ENCODE measurements at regions of chr17 and their contacts with region 1.

Region 1: DNA sequence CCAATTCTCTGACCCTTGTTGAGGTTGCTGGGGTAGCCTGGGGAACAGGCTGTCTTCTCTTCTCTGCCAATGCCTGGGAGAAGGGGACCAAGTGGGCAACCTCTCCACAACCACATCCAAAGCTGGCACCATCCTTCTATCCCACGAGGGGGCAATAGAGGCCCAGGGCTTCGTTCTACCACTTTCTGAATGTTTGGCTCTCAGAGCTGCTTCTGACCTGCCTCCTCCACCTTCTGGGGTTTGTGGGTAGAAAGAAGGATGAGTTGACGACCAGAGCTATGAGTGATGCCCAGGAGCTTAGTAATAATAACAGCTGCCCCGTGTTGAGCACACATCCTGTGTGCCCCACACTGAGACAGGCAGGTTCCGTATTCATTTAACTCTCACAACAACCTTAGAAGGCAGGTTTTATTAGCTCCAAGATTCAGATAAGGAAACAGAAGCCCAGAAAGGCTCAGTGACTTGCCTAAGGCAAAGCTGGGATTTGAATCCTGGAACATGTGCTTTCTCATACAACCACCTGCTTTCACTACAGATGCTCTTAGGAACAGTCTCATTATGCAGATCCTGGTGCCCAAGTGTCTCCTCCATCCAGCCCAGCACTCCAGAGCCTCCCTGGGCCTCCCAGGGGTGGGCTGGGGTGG is 11.1 kb downstream of the TSPOAP1 start:
- DNase-seq: peak; percentile 14
- H3K4me3 ChIP-seq: no peak overlapping the region
- H3K27me3 ChIP-seq: no peaks in the 10 kb centered on the region
- CTCF ChIP-seq: peak; percentile 84

Region 2: GRCh38 chr17:58265902-58266875 is 51.4 kb before region 1 on chr17:
- CTCF ChIA-PET with region 1: no interaction called
- POLR2A ChIA-PET with region 1: no interaction called
- DNase-seq: no peak
- H3K4me3 ChIP-seq: no peak overlapping the region
- H3K27me3 ChIP-seq: peaks cover 1% of the 10 kb centered on the region; the same call in 1 of the 2 replicates
- CTCF ChIP-seq: no peak

Region 3: GRCh38 chr17:58294034-58294433 is 23.5 kb before region 1 on chr17:
- CTCF ChIA-PET with region 1: no interaction called
- POLR2A ChIA-PET with region 1: no interaction called
- DNase-seq: no peak
- H3K4me3 ChIP-seq: no peak overlapping the region
- H3K27me3 ChIP-seq: no peaks in the 10 kb centered on the region; the same call in 1 of the 2 replicates
- CTCF ChIP-seq: no peak

Region 4: DNA sequence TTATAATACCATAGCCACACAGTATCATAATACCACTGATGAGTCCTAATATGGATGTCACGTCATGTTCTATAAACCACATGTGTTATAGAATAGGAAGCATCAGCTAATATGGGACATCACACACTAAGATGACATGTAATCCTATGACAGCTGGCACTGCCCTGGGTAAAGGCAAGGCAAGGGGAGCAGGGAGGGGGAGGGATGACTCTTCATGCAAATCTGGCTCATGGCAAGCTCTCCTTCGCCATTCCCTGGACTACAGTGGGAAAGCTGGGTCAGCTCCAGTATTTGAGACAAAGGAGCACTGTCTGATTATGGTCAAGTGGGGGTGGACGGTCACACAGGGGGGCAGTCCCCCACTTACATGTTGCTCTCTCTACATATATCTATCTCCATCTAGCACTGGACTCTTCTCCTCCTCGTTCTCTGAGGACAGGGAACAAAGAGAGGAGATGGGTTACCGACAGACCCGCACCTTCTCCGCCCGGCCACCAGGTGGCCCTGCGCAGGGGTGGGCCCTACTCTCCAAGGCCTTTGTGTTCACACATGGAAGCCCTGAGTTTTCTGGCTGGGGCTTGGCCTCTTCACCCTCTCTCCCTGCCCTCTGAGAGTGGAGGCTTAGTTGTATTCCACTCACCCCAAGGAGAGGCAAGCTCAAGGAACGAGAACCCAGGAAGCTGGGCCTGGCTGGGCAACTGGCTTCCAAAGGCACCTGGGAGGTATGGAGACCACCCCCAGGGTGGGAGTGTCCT is 13.4 kb before region 1 on chr17:
- CTCF ChIA-PET with region 1: interaction called, 25 read pairs
- POLR2A ChIA-PET with region 1: no interaction called
- DNase-seq: no peak
- H3K4me3 ChIP-seq: no peak overlapping the region
- H3K27me3 ChIP-seq: no peaks in the 10 kb centered on the region
- CTCF ChIP-seq: peak; percentile 85

Region 5: GRCh38 chr17:58337600-58338453 is 20.3 kb after region 1 on chr17:
- CTCF ChIA-PET with region 1: interaction called, 19 read pairs
- POLR2A ChIA-PET with region 1: interaction called, 3 read pairs
- DNase-seq: peak; percentile 70
- H3K4me3 ChIP-seq: no peak overlapping the region
- H3K27me3 ChIP-seq: no peaks in the 10 kb centered on the region
- CTCF ChIP-seq: no peak; the same call in 1 of the 2 replicates

Region 6: GRCh38 chr17:58409432-58409831 is 91.9 kb after region 1 on chr17:
- CTCF ChIA-PET with region 1: interaction called, 95 read pairs
- POLR2A ChIA-PET with region 1: no interaction called
- DNase-seq: no peak
- H3K4me3 ChIP-seq: no peak overlapping the region
- H3K27me3 ChIP-seq: no peaks in the 10 kb centered on the region; the same call in 1 of the 2 replicates
- CTCF ChIP-seq: no peak

Region 7: DNA sequence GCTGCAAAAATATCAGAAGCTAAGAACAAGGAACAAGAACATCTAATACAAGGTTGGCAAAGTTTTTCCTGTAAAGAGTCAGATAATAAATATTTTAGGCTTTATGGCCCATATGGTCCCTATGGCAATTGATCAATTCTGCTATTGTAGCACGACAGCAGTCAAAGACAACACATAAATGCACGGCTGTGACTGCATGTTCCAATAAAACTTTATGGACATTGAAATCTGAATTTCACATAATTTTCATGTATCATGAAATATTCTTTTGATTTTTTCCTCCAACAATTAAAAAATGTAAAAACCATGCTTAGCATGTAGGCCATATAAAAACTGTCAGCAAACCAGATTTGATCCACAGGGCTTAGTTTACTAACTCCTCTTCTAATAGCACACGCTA is 110.3 kb after region 1 on chr17:
- CTCF ChIA-PET with region 1: interaction called, 15 read pairs
- POLR2A ChIA-PET with region 1: no interaction called
- DNase-seq: no peak
- H3K4me3 ChIP-seq: no peak overlapping the region
- H3K27me3 ChIP-seq: no peaks in the 10 kb centered on the region
- CTCF ChIP-seq: no peak

Region 8: DNA sequence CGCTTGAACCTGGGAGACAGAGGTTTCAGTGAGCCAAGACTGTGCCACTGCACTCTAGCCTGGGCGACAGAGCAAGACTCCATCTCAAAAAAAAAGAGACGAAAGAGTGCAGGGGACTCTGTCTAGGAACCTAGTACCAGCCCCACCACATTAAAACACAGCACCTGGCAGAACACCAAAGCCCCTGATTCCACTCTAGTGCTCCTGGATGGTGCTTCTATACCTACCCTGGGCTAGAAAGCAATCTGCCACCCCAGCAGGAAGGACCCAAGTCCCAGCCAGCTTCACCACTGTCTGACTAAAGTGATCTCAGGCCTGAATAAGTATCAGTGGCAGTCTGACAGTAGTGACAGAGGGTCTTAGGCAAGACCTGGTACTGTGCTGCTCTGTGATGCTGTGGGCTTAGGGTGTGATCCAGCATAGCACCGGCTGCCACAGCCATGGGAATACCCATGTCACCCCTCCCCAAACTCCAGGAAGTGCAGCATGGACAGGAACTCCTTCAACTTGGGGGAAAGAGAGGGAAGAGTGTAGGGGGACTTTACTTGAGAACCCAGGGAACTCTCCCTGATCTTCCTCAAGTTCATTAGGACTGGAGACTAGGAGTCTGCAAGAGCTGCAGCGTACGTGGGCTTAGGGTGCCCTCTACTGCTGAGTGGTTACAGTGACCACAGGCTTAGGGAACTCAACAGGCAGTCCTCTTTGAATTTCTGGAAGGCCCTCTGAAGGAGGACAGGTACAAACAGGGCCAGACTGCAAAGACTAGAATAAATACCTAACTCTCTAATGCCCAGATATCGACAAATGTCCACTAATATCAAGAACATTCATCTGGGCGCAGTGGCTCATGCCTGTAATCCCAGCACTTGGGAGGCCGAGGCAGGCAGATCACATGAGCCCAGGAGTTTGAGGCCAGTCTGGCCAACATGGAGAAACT is 129.8 kb after region 1 on chr17:
- CTCF ChIA-PET with region 1: interaction called, 55 read pairs
- POLR2A ChIA-PET with region 1: no interaction called
- DNase-seq: peak; percentile 17
- H3K4me3 ChIP-seq: no peak overlapping the region
- H3K27me3 ChIP-seq: no peaks in the 10 kb centered on the region
- CTCF ChIP-seq: peak; percentile 82